ENCODE measurements at regions of chr17 and their contacts with region 1.

Region 1: DNA sequence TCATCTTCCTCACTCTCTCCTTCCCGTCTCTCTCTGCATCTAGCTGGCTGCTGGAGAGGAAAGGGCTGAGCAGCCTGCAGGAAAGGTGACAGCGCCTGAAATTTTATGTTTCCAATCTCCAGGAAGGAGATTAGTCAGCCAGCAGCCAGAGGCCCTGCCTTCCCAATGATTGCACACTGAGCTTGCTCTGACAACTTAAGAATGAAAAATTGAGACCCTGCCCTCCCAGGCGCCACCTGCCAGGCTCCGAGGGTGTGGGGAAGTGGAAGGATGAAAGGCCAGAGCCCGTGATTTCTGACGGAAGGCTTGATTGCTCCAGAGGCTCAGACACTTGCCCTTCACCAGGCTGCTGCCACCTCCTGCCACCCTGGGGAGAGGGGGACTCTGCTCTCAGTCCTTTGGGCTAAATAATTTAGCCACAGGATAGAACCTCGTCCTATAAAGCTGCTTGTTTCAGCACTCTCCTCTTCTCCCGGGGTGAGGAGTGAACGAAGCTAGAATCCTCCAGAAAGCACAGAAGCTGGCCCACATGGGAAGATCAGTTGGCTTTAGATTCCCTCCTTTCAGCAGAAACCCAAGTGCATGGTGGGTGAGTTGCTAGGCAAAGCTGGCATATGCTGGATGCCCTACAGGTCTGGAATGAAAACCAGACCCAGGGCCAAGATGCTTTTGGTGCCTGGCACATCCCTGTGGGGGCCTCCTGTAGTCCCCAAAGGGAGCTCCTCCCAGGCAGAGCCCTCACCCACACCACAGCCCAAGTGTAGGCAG is 33.5 kb downstream of the GRIN2C start:
- DNase-seq: no peak
- ATAC-seq: no peak
- H3K4me3 ChIP-seq: no peak overlapping the region
- H3K27ac ChIP-seq: no peak overlapping the region
- H3K4me1 ChIP-seq: no peaks in the 10 kb centered on the region
- H3K27me3 ChIP-seq: no peaks in the 10 kb centered on the region
- CTCF ChIP-seq: no peak

Region 2: GRCh38 chr17:74785096-74785980 is 40.8 kb before region 1 on chr17:
- CTCF ChIA-PET with region 1: interaction called, 3 read pairs
- POLR2A ChIA-PET with region 1: interaction called, 27 read pairs
- in situ Hi-C with region 1: no loop called
- intact Hi-C with region 1: no loop called
- DNase-seq: no peak
- ATAC-seq: no peak
- H3K4me3 ChIP-seq: no peak overlapping the region
- H3K27ac ChIP-seq: no peak overlapping the region
- H3K4me1 ChIP-seq: no peaks in the 10 kb centered on the region
- H3K27me3 ChIP-seq: no peaks in the 10 kb centered on the region
- CTCF ChIP-seq: no peak

Region 3: GRCh38 chr17:74892974-74893911 is 67.1 kb after region 1 on chr17 and contains the start of gene FADS6:
- CTCF ChIA-PET with region 1: no interaction called
- POLR2A ChIA-PET with region 1: no interaction called
- in situ Hi-C with region 1: no loop called
- intact Hi-C with region 1: no loop called
- DNase-seq: no peak
- ATAC-seq: peak; percentile 41
- H3K4me3 ChIP-seq: peak within 1 kb of the TSS; percentile 39 to 41
- H3K27ac ChIP-seq: no peak within 1 kb of the TSS
- H3K4me1 ChIP-seq: no peaks in the 10 kb centered on the region
- H3K27me3 ChIP-seq: peaks cover 12% of the 10 kb centered on the region
- CTCF ChIP-seq: no peak
- total RNA-seq, gene FADS6: not detected

Region 4: DNA sequence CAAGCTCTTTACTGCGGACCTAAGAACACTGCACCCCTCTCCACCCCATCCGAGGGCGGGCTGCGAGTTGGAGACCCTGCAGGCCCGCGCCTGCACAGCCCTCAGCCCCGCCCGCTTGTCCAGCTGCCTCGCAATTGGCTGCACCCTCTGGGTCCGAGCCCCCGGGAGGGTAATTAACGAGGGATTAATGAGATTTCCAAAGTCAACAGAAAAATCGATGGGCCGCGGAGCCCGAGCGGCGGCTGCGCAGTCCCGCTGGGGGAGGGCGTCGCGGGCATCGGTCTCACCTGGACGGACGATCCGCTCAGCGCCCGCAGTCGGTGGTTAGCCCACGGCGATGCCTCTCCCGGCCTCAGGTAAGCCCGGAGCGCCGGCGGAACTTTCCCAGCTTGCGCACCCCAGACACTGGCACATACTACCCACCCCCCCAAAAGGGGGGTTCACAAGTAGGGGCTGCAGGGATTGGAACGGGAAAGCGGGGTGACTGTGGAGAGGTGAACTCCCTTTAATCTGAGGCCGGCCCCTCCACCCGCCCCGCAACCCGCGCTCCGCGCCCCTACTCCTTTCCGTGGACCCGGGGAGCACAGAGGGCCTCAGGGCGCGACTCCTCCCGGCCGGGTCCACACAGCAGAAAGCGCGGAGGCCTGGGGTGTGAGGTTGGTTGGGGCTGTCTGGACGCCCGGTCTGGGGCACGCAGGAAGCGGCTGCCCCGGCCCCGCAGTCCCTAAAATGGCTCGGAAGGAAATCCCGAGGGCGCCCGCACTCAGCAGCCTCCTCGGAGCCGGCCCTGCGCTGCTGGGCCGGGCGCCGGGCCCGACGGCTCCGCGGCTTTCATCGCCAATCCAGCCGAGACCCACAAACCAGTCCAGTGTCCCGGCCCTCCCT is 109.7 kb after region 1 on chr17 and contains the start of gene OTOP3:
- CTCF ChIA-PET with region 1: no interaction called
- POLR2A ChIA-PET with region 1: no interaction called
- in situ Hi-C with region 1: no loop called
- intact Hi-C with region 1: no loop called
- DNase-seq: no peak
- ATAC-seq: peak; percentile 60
- H3K4me3 ChIP-seq: no peak within 1 kb of the TSS
- H3K27ac ChIP-seq: no peak within 1 kb of the TSS
- H3K4me1 ChIP-seq: no peaks in the 10 kb centered on the region
- H3K27me3 ChIP-seq: peaks cover 13% of the 10 kb centered on the region; the same call in 1 of the 2 replicates
- CTCF ChIP-seq: no peak
- total RNA-seq, gene OTOP3: not detected